ENCODE measurements at regions of chr11 and their contacts with region 1.

Region 1: GRCh38 chr11:58654079-58654907 is 31.8 kb downstream of the CNTF start:
- DNase-seq: no peak
- ATAC-seq: peak; percentile 98
- H3K4me3 ChIP-seq: no peak overlapping the region
- H3K27ac ChIP-seq: no peak overlapping the region
- H3K4me1 ChIP-seq: no peaks in the 10 kb centered on the region; the same call in 1 of the 2 replicates
- H3K27me3 ChIP-seq: no peaks in the 10 kb centered on the region
- CTCF ChIP-seq: peak; percentile 92

Region 2: GRCh38 chr11:58788355-58789023 is 134.2 kb after region 1 on chr11:
- CTCF ChIA-PET with region 1: no interaction called
- POLR2A ChIA-PET with region 1: no interaction called
- in situ Hi-C with region 1: no loop called
- intact Hi-C with region 1: loop called (anchors 1 kb)
- DNase-seq: peak; percentile 43
- ATAC-seq: peak; percentile 82
- H3K4me3 ChIP-seq: no peak overlapping the region
- H3K27ac ChIP-seq: no peak overlapping the region
- H3K4me1 ChIP-seq: no peaks in the 10 kb centered on the region
- H3K27me3 ChIP-seq: no peaks in the 10 kb centered on the region
- CTCF ChIP-seq: peak; percentile 89

Region 3: GRCh38 chr11:59062602-59063529 is 408.6 kb after region 1 on chr11:
- CTCF ChIA-PET with region 1: no interaction called
- POLR2A ChIA-PET with region 1: no interaction called
- in situ Hi-C with region 1: no loop called
- intact Hi-C with region 1: loop called (anchors 10 kb)
- DNase-seq: no peak
- ATAC-seq: no peak
- H3K4me3 ChIP-seq: no peak overlapping the region
- H3K27ac ChIP-seq: no peak overlapping the region
- H3K4me1 ChIP-seq: no peaks in the 10 kb centered on the region
- H3K27me3 ChIP-seq: peaks cover 12% of the 10 kb centered on the region
- CTCF ChIP-seq: no peak

Measured in Panc1 (cell line).